Activated naive CD4-positive, alpha-beta T cell treated with anti-CD3 and anti-CD28 coated beads for 36 hours (primary cell): ENCODE measurements at regions of chr1 and their contacts with region 1.

Region 1: DNA sequence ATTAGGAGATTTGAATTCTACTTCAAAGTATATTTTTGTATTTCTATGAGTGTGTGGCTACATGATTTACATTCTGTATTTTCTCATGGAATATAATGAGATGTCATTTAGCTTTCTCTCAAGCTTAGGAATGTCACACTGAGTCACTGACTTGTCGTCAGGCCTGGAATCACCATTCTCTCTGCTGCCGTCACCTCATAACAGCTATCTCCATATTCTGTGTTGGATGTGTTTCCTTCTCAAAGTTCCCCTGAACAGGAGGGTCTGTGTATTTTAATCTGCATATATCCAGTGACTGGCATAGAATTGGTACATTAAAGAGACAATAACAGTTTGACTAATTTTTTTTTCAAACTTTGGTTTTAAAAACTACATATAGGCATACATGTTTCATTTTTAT is 35.9 kb downstream of the LYPLAL1 start:
- DNase-seq: no peak
- H3K4me3 Mint-ChIP-seq: no peak overlapping the region
- H3K27ac Mint-ChIP-seq: no peak overlapping the region
- H3K4me1 Mint-ChIP-seq: no peaks in the 10 kb centered on the region
- H3K27me3 Mint-ChIP-seq: no peaks in the 10 kb centered on the region

Region 2: GRCh38 chr1:219385786-219386427 is 176.3 kb after region 1 on chr1:
- CTCF ChIA-PET with region 1: no interaction called
- intact Hi-C with region 1: loop called (anchors 1 kb)
- DNase-seq: peak; percentile 60
- H3K4me3 Mint-ChIP-seq: no peak overlapping the region
- H3K27ac Mint-ChIP-seq: no peak overlapping the region
- H3K4me1 Mint-ChIP-seq: no peaks in the 10 kb centered on the region
- H3K27me3 Mint-ChIP-seq: no peaks in the 10 kb centered on the region

Region 3: GRCh38 chr1:219416594-219417238 is 207.1 kb after region 1 on chr1:
- CTCF ChIA-PET with region 1: no interaction called
- intact Hi-C with region 1: loop called (anchors 1 kb)
- DNase-seq: peak; percentile 78
- H3K4me3 Mint-ChIP-seq: no peak overlapping the region
- H3K27ac Mint-ChIP-seq: no peak overlapping the region
- H3K4me1 Mint-ChIP-seq: no peaks in the 10 kb centered on the region
- H3K27me3 Mint-ChIP-seq: no peaks in the 10 kb centered on the region

Region 4: GRCh38 chr1:219566951-219567947 is 357.7 kb after region 1 on chr1:
- CTCF ChIA-PET with region 1: no interaction called
- intact Hi-C with region 1: loop called (anchors 5 kb)
- DNase-seq: no peak
- H3K4me3 Mint-ChIP-seq: no peak overlapping the region
- H3K27ac Mint-ChIP-seq: no peak overlapping the region
- H3K4me1 Mint-ChIP-seq: no peaks in the 10 kb centered on the region
- H3K27me3 Mint-ChIP-seq: no peaks in the 10 kb centered on the region

Region 5: GRCh38 chr1:219660666-219661463 is 451.3 kb after region 1 on chr1:
- CTCF ChIA-PET with region 1: no interaction called
- intact Hi-C with region 1: loop called (anchors 1 kb)
- DNase-seq: peak; percentile 68
- H3K4me3 Mint-ChIP-seq: no peak overlapping the region
- H3K27ac Mint-ChIP-seq: no peak overlapping the region
- H3K4me1 Mint-ChIP-seq: no peaks in the 10 kb centered on the region
- H3K27me3 Mint-ChIP-seq: peaks cover 26% of the 10 kb centered on the region

Region 6: DNA sequence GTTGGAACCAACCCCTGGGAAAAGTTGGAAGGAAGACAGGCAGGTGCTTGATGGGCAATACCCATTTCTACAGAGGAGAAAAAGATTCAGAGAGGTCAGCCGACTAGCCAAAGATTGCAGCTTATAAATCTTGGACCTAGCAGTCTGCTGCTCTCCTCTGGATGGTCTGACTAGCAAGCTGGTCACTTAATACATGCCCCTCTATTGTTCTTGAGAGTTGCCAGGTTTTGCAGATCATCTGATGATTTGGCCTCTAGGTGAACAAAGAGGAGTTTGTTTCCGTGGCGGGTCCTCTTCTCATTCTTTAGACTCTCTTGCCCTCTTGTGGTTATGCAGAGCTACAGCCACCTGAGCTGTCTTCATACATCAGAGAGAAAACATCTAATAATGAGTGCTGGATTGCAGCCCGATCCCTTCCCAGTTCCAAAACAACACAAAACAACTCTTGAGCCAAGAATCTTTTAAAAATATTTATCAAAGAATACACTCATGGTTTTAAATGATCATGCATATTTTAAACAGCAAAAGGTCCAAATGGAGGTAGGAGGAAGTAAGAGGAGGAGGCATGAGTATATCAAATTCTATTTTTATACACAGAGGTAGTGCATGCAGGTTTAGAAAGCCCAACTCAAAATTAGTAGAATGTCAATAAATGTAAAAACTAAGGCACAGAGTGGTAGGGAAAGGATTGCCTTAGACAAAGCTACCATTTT is 603.1 kb after region 1 on chr1:
- CTCF ChIA-PET with region 1: no interaction called
- intact Hi-C with region 1: loop called (anchors 10 kb)
- DNase-seq: peak; percentile 16
- H3K4me3 Mint-ChIP-seq: no peak overlapping the region
- H3K27ac Mint-ChIP-seq: no peak overlapping the region
- H3K4me1 Mint-ChIP-seq: no peaks in the 10 kb centered on the region
- H3K27me3 Mint-ChIP-seq: peaks cover 17% of the 10 kb centered on the region